ENCODE measurements at regions of chr1 and their contacts with region 1.

Region 1: DNA sequence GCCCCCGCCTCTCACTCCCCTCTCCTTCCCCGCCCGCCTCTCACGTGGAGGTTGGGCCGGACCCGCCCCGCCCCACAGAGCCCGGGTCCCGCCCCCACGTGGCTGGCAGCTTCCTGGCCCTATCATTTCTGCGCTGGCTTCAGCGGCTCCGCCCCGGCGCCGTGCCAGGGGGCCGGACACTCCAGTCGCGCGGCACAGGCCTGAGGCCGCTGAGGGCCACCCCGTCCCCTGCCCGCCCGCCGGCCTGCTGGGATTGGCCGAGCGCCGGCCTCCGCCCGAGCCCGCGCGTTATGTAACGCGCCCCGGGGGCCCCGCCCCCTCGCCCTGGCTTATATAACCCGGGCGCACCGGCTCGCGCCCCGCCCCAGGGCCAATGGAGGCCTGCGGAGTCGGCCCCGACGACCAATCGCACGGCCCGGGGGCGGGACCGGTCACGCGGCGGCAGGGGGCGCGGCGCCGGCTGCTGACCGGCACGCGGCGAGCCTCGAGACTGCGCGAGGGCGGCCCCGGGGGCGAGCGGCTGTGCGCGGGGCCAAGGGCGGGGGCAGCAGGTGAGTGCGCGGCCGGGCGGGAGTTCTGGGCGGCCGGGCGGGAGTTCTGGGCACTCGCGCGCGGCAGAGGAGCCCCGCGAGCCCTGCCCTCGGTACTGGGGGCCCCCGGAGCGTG is at the start of gene PER3:
- DNase-seq: peak; percentile 84 to 99
- H3K4me3 ChIP-seq: peak within 1 kb of the TSS; percentile 58
- H3K27ac ChIP-seq: peak within 1 kb of the TSS; percentile 39; the same call in 1 of the 2 replicates
- H3K4me1 ChIP-seq: no peaks in the 10 kb centered on the region
- H3K27me3 ChIP-seq: no peaks in the 10 kb centered on the region
- CTCF ChIP-seq: no peak
- total RNA-seq, gene PER3: 25.1 and 32.9 TPM in 2 replicates

Region 2: DNA sequence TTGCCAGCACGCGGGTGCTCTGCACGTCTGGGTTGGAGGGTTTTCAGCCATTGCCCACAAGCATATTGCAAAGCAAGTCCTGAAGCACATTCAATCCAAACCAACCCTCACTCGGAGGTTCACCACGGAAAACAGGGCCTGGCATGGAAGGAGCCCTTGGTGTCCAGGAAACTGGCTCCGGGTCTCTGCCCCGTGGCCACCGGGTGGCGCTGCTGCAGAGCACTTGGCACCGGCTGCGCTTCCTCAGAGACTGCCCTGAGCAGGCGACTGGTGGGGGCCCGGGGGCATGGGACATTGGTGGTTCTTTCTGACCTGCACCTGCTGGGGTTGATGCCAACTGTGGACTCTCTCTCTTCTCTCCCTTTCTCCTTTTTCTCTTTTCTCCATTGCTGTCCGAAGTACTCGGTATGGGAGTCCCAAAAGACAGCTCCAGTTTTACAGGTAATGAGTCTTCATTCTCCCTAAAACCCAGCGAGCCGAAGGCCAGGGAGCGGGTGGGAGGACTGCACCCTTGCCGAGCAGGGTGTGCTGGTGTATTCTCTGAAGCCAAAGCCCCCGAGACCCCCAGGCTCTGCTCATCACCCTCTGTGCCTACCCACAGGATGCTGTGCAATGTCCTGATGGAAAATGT is 1742.4 kb before region 1 on chr1:
- CTCF ChIA-PET with region 1: interaction called, 10 read pairs
- POLR2A ChIA-PET with region 1: no interaction called
- intact Hi-C with region 1: no loop called
- DNase-seq: peak in 1 of 2 experiments; percentile 44
- H3K4me3 ChIP-seq: no peak overlapping the region
- H3K27ac ChIP-seq: no peak overlapping the region
- H3K4me1 ChIP-seq: no peaks in the 10 kb centered on the region
- H3K27me3 ChIP-seq: no peaks in the 10 kb centered on the region
- CTCF ChIP-seq: peak; percentile 62

Region 3: GRCh38 chr1:7726623-7727022 is 57.3 kb before region 1 on chr1:
- CTCF ChIA-PET with region 1: no interaction called
- POLR2A ChIA-PET with region 1: no interaction called
- intact Hi-C with region 1: no loop called
- DNase-seq: no peak
- H3K4me3 ChIP-seq: no peak overlapping the region
- H3K27ac ChIP-seq: no peak overlapping the region
- H3K4me1 ChIP-seq: no peaks in the 10 kb centered on the region
- H3K27me3 ChIP-seq: peaks cover 72% of the 10 kb centered on the region
- CTCF ChIP-seq: no peak

Region 4: GRCh38 chr1:7961216-7962015 is 177.5 kb after region 1 on chr1 and contains the start of gene PARK7:
- CTCF ChIA-PET with region 1: no interaction called
- POLR2A ChIA-PET with region 1: no interaction called
- intact Hi-C with region 1: loop called (anchors 1 kb)
- DNase-seq: peak; percentile 96 to 100
- H3K4me3 ChIP-seq: peak within 1 kb of the TSS; percentile 96
- H3K27ac ChIP-seq: peak within 1 kb of the TSS; percentile 70
- H3K4me1 ChIP-seq: peaks cover 15% of the 10 kb centered on the region
- H3K27me3 ChIP-seq: no peaks in the 10 kb centered on the region
- CTCF ChIP-seq: peak; percentile 43; the same call in 1 of the 2 replicates
- total RNA-seq, gene PARK7: 242 and 291 TPM in 2 replicates

Region 5: DNA sequence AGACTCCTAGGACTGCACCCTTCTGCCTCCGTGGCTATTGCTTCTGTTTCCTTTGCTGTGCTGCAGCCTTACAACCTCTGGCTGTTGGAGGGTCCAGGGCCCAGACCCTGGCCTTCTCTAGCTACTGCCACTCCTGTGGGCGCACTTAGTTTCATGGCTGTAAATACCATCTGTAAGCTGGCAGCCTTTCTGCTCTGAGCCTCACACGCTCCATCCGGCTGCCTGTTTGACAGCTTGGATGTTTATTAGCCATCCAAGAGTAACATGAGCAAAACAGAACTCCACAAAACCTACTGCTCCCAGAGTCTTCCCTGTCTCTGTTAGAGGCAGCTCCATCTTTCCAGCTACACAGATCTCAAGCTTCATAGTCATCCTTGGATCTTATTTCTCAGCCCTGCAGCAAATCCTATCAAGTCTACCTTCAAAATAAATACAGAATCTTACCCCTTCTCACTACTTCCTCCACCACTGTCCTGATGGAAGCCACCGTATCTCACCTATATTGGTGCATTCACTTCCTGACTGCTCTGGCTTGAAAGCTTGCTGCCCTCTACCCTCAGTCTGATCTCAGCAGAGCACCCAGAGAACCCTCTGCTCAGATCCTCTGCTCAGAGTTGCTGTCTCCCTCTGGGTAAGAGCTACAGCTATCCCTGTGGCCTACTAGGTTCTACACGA is 1774.4 kb after region 1 on chr1:
- CTCF ChIA-PET with region 1: no interaction called
- POLR2A ChIA-PET with region 1: interaction called, 16 read pairs
- intact Hi-C with region 1: no loop called
- DNase-seq: no peak
- H3K4me3 ChIP-seq: no peak overlapping the region
- H3K27ac ChIP-seq: no peak overlapping the region
- H3K4me1 ChIP-seq: peaks cover 26% of the 10 kb centered on the region
- H3K27me3 ChIP-seq: no peaks in the 10 kb centered on the region
- CTCF ChIP-seq: no peak

Measured in PC-9 (cell line).